ENCODE measurements at regions of chr16 and their contacts with region 1.

Region 1: DNA sequence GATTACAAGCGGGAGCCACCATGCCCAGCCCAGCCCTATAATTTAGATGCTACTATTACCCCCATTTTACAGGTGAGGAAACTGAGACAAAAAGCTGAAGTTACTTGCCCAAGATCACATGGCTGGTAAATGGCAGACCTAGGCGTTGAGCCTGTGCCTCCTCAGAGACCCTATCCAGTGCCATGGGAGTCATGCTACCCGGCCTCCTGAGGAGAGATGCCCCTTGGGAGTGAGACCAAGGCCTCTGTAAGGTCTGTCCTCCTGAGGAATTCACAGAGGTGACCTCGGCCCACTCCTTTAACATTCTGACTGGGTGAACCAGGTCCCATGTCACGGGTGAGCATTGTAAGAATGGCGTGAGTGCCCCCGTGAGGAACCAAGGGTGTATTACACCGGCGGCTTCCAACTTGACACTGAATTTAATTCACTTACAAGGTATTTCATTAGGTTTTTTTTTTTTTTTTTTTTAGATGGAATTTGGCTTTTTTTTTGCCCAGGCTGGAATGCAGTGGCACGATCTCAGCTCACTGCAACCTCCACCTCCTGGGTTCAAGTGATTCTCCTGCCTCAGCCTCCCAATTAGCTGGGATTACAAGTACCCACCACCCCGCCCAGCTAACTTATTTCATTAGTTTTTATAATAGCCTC is 95.7 kb downstream of the ABCC6 start:
- ATAC-seq: peak in 7 of 8 experiments; percentile 32 to 88 (median 53)
- H3K4me3 ChIP-seq: no peak overlapping the region
- H3K27ac ChIP-seq: no peak overlapping the region
- H3K4me1 ChIP-seq: no peaks in the 10 kb centered on the region

Region 2: GRCh38 chr16:15765880-15766279 is 361.7 kb before region 1 on chr16:
- in situ Hi-C with region 1: loop called in 1 of 9 experiments (anchors 25 kb)
- ATAC-seq: peak; percentile 33 to 90 (median 66)
- H3K4me3 ChIP-seq: no peak overlapping the region
- H3K27ac ChIP-seq: no peak overlapping the region
- H3K4me1 ChIP-seq: no peaks in the 10 kb centered on the region

Region 3: GRCh38 chr16:15843635-15844279 is 283.8 kb before region 1 on chr16:
- in situ Hi-C with region 1: no loop called
- ATAC-seq: no peak
- H3K4me3 ChIP-seq: no peak overlapping the region
- H3K27ac ChIP-seq: no peak overlapping the region
- H3K4me1 ChIP-seq: no peaks in the 10 kb centered on the region

Region 4: GRCh38 chr16:15874745-15875314 is 252.8 kb before region 1 on chr16:
- in situ Hi-C with region 1: loop called in 2 of 9 experiments (anchors 25 kb)
- ATAC-seq: peak in 5 of 8 experiments; percentile 52 to 94 (median 81)
- H3K4me3 ChIP-seq: no peak overlapping the region
- H3K27ac ChIP-seq: no peak overlapping the region
- H3K4me1 ChIP-seq: no peaks in the 10 kb centered on the region